ENCODE measurements at regions of chr17 and their contacts with region 1.

Region 1: DNA sequence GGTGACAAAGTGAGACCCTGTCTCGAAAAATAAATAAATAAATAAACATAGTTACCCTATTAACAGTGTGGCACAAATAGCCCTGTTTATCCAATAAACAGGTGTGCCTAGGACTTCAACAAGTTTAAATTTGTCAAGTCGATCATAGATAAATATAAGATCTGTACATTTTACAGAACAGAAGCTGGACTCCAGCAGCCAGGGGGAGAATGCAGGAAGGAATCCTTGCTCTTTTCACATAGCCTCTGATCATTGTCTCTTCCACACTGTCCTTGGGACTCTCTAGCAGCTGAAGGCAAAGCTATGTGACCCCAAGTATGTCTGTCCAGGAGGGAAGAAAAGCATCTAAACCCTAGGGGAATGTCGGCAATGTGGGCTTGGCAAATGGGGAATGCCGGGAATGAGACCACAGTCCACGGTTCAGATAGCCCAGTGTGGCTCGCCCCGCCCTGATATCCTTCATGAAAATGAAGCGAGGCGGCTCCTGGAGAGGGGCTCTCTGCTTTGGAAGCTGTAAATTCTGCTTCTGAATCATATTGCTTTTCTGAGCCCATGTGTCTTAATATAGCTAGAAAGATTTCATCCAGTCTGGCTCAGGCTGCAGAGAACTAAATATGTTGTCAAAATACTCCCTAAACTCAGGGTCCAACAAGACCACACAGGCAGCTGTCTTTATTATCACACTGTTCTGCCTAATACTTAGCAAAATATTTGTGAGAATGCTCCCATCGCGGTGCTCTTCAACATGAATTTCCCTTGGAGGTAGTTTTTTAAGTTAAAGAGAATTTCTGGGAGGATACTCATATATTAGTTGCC is 24.9 kb upstream of the GRB2 start:
- DNase-seq: no peak
- H3K4me3 ChIP-seq: no peak overlapping the region
- H3K27ac ChIP-seq: no peak overlapping the region
- H3K4me1 ChIP-seq: no peaks in the 10 kb centered on the region
- H3K27me3 ChIP-seq: no peaks in the 10 kb centered on the region
- CTCF ChIP-seq: no peak

Region 2: DNA sequence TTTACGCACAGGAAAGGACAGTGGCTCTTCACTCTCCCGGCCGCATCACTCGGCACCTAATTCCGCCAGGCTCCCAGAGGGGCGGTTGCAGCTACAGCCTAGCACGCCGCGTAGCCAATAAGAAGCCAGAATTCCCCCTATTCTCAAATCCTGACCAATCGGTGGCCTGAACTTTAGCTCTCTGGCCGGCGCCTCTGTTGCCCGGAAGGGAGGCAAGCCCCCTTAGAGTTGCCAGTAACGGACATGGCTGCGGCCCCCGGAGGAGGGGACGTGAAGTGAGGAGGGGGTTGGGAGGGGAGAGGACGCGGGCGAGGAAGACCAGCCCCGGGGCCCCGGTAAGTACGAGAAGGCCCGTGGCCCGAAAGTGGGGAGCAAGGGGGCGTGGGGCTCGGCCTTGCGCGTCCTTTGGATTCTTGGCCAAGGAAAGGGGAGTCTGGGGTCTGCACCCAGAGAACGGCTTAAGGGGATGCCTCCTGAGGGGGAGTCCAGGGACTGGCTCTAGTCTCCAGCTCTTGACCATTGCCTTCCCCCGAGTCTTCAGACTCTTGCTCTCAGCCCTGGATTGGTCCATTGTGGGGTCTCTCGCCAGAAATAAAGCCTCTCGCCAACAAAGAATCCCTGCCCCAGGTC is 26.2 kb after region 1 on chr17 and contains the start of gene TMEM94:
- CTCF ChIA-PET with region 1: interaction called, 6 read pairs
- dilution Hi-C with region 1: no loop called
- in situ Hi-C with region 1: no loop called
- intact Hi-C with region 1: loop called (anchors 2 kb)
- DNase-seq: peak; percentile 96
- H3K4me3 ChIP-seq: peak within 1 kb of the TSS; percentile 79 to 91 (median 90)
- H3K27ac ChIP-seq: peak within 1 kb of the TSS; percentile 64
- H3K4me1 ChIP-seq: peaks cover 6% of the 10 kb centered on the region
- H3K27me3 ChIP-seq: no peaks in the 10 kb centered on the region
- CTCF ChIP-seq: no peak
- total RNA-seq, gene TMEM94: 23.0 to 42.3 TPM

Region 3: DNA sequence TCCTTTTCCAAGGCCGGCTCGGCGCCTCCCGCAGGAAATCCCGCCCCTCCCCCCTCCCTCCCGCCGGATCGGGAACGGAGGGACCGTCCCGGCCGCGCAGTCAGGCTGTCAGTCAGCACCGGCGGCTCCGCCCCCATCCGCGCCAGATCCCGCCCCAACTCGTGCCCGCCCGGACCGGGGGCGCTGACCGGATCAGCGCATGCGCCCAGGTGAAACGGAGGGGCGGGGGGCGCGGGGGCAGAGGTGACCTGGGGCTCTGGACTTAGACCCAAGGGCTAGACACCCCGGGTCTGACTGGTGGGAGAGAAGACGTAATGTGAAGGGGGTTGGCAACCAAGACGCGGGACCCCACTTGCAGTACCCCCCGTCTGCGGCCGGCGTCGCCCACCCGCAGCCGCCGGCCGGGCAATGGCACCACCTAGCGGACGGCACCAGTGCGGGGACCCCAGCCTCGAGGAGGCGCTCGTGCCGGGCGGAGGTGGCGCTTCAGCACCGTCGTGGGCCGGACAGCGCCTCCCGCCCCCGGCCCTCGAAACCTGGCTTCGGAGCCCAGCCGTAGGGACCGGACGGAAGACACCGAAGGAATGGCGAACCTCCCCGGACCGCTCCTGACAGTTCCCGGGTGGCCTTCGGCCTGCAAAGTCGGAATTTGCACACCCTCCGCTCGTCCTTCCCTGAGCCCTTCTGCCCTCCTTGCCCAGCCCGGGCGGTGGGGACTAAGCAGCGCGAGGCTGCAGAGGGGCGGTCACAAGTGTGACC is 85.3 kb after region 1 on chr17 and contains the start of gene CASKIN2:
- CTCF ChIA-PET with region 1: no interaction called
- dilution Hi-C with region 1: no loop called
- in situ Hi-C with region 1: loop called in 1 of 2 experiments (anchors 10 kb)
- intact Hi-C with region 1: loop called (anchors 1 kb)
- DNase-seq: peak; percentile 86
- H3K4me3 ChIP-seq: peak within 1 kb of the TSS; percentile 57 to 87 (median 70)
- H3K27ac ChIP-seq: no peak within 1 kb of the TSS
- H3K4me1 ChIP-seq: peaks cover 25% of the 10 kb centered on the region
- H3K27me3 ChIP-seq: no peaks in the 10 kb centered on the region
- CTCF ChIP-seq: peak; percentile 80 to 98
- total RNA-seq, gene CASKIN2: 10.5 to 22.1 TPM

Region 4: GRCh38 chr17:75531730-75532090 is 101.3 kb after region 1 on chr17:
- CTCF ChIA-PET with region 1: no interaction called
- dilution Hi-C with region 1: loop called (anchors 5 kb)
- in situ Hi-C with region 1: no loop called
- intact Hi-C with region 1: no loop called
- DNase-seq: peak; percentile 38
- H3K4me3 ChIP-seq: no peak overlapping the region
- H3K27ac ChIP-seq: no peak overlapping the region
- H3K4me1 ChIP-seq: peaks cover 4% of the 10 kb centered on the region
- H3K27me3 ChIP-seq: no peaks in the 10 kb centered on the region
- CTCF ChIP-seq: no peak

Region 5: GRCh38 chr17:75632863-75633485 is 202.6 kb after region 1 on chr17 and contains the start of gene SMIM5:
- CTCF ChIA-PET with region 1: no interaction called
- dilution Hi-C with region 1: no loop called
- in situ Hi-C with region 1: no loop called
- intact Hi-C with region 1: loop called (anchors 1 kb)
- DNase-seq: peak; percentile 71
- H3K4me3 ChIP-seq: no peak within 1 kb of the TSS
- H3K27ac ChIP-seq: peak within 1 kb of the TSS; percentile 6
- H3K4me1 ChIP-seq: peaks cover 17% of the 10 kb centered on the region
- H3K27me3 ChIP-seq: no peaks in the 10 kb centered on the region
- CTCF ChIP-seq: peak; percentile 87 to 93
- total RNA-seq, gene SMIM5: not detected